ENCODE measurements at regions of chr1 and their contacts with region 1.

Region 1: DNA sequence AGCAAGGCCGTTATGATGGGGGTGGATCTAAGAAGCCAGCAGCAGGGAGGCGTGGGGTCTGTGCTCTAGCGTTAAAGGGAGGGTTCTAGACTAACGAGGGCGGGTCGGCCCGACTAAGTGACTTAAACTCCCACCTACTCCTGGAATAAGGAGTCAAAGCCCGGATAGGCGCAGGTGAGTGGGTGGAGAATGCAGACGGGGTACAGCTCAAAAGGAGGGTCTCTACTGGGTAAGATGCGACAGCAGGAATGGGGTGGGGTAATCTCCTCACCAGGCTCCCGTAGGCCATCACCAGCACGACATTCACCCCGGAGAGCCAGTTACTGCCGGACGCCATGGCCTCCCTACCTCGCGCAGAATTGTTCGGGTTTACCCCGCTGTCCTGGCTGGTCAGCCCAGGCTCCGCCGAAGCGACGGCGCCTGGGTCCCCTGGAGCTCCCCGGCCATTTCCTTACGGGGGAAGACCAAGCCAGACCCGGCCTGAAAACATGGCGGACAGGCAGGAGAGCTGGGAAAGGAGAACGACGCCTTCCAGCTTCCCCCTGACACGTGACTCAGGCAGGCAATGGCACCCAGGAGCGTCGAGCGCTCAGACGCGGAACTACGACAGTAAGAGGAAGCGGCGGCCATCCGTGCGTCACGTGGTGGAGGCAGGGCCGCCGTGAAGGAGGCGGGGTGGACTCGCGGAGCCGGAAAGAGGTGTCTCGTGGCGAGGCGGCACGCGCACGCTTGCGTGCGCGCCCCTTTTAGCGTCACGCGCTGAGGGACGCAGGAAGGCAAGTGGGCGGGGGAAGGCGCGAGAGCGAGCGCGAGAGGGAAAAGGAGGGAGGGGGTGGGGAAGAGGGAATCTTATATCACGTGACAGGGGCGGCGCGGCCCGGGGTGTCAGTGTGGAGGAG is at the start of gene UBAP2L:
- DNase-seq: peak; percentile 98
- ATAC-seq: peak; percentile 84
- H3K4me3 Mint-ChIP-seq: peak within 1 kb of the TSS; percentile 99
- H3K27ac Mint-ChIP-seq: peak within 1 kb of the TSS; percentile 100
- H3K4me1 Mint-ChIP-seq: peaks cover 75% of the 10 kb centered on the region
- H3K27me3 Mint-ChIP-seq: no peaks in the 10 kb centered on the region
- CTCF ChIP-seq: no peak
- total RNA-seq, gene UBAP2L: 209 and 234 TPM in 2 replicates

Region 2: GRCh38 chr1:153790966-153791647 is 429.2 kb before region 1 on chr1:
- CTCF ChIA-PET with region 1: no interaction called
- POLR2A ChIA-PET with region 1: no interaction called
- intact Hi-C with region 1: loop called (anchors 2 kb)
- DNase-seq: no peak
- ATAC-seq: peak; percentile 92
- H3K4me3 Mint-ChIP-seq: peak overlapping the region; percentile 71
- H3K27ac Mint-ChIP-seq: peak overlapping the region; percentile 96
- H3K4me1 Mint-ChIP-seq: peaks cover 45% of the 10 kb centered on the region
- H3K27me3 Mint-ChIP-seq: no peaks in the 10 kb centered on the region
- CTCF ChIP-seq: no peak

Region 3: GRCh38 chr1:154137888-154138287 is 82.4 kb before region 1 on chr1:
- CTCF ChIA-PET with region 1: no interaction called
- POLR2A ChIA-PET with region 1: no interaction called
- intact Hi-C with region 1: no loop called
- DNase-seq: no peak
- ATAC-seq: no peak
- H3K4me3 Mint-ChIP-seq: no peak overlapping the region
- H3K27ac Mint-ChIP-seq: no peak overlapping the region
- H3K4me1 Mint-ChIP-seq: no peaks in the 10 kb centered on the region
- H3K27me3 Mint-ChIP-seq: no peaks in the 10 kb centered on the region
- CTCF ChIP-seq: no peak

Region 4: DNA sequence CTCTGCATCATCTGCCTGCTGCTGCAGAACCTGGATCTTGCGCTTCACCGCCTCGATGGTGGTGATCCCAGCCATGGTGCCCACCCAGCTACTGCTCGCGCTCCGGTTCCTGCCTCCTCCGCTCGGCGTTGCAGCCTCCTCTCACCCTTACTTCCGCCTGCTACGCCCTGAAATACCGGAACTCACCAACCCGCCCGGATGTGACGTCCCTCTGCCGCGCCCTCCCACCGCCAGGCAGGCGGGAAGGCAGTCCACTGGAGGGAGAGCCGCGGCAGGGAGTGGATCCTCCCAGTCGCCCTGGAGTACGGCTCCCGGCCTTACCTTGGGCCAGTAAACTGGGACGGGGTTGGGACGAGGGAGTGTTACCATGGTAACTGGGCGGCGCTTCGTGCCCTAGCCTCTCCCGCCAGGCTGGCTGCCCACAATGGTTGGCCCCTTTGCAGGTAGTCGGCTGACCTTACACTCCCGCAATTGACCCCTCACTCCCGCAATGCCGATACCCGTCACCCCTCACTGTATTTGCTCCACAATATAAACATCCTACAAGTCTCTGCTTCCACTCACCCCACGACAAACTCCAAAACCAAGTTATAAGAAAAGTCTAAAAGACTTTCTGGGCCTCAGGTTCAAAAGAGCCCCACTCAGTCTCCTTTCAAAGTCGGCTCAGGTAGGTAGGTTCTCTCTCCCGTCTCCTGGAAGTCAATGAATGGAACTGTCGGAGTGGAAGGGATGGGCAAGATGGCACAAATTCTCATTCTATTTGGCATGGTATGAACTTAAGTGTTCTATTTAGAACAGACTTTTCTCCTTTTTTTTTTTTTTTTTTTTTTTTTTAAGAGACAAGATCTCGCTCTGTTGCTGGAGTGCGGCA is 37.0 kb before region 1 on chr1:
- CTCF ChIA-PET with region 1: no interaction called
- POLR2A ChIA-PET with region 1: interaction called, 31 read pairs
- intact Hi-C with region 1: loop called (anchors 1 kb)
- DNase-seq: peak; percentile 93
- ATAC-seq: peak; percentile 76
- H3K4me3 Mint-ChIP-seq: peak overlapping the region; percentile 100
- H3K27ac Mint-ChIP-seq: peak overlapping the region; percentile 100
- H3K4me1 Mint-ChIP-seq: peaks cover 48% of the 10 kb centered on the region
- H3K27me3 Mint-ChIP-seq: peaks cover 2% of the 10 kb centered on the region
- CTCF ChIP-seq: no peak

Region 5: DNA sequence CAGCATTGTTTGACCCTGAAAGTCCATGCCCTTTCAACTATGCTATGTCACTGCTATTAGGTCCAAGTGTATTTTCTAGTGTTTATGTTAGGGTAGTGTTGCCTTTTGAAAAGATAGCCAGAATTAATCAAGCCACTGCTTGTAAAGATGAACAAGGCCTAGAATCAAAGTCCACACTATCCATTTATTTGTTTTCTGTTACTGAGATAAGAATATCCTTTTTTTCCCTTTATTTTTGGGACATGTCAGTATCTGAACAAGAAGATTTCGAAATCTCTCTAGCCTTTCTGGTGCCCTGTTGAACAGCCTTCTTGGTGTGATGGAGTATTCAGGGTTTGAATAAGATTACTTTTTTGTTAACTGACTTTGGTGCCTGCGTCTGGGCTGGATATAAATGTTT is 17.1 kb after region 1 on chr1:
- CTCF ChIA-PET with region 1: no interaction called
- POLR2A ChIA-PET with region 1: interaction called, 3 read pairs
- intact Hi-C with region 1: loop called (anchors 2 kb)
- DNase-seq: no peak
- ATAC-seq: no peak
- H3K4me3 Mint-ChIP-seq: no peak overlapping the region
- H3K27ac Mint-ChIP-seq: no peak overlapping the region
- H3K4me1 Mint-ChIP-seq: peaks cover 3% of the 10 kb centered on the region
- H3K27me3 Mint-ChIP-seq: no peaks in the 10 kb centered on the region
- CTCF ChIP-seq: no peak